ENCODE measurements at regions of chr17 and their contacts with region 1.

Region 1: DNA sequence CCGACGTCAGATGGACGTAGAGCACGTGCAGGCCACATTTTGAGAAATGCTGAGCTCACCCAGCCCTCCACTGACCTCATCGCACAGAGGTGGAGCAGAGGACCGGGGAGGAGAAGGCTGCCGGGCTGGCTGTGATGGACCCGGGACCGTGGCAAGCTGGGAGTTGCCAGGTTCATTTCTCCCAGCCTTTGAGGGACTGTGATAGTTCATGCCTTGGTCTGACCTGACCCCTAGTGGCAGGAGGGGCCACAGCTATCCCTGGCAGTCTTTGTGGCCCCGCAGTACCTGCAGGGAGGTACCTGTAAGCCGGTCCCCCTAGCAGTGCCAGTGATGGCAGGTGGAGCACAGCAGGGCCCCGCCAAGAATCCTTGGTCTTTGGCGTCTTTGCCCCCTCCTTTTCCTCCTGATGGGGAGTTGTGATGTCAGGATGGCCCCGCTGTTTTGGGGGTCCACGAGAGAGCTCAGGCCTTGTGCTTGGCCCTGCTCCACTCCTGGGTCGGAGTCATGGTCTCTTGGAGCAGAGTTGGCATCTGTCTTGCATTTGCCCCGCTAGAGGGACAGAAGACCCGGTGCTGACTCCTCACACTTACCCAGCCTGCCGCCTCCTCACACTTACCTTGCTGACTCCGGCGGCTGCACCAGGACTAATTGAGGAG is 50.4 kb downstream of the OR1D5 start:
- DNase-seq: peak; percentile 36 to 63
- ATAC-seq: peak; percentile 69

Region 2: DNA sequence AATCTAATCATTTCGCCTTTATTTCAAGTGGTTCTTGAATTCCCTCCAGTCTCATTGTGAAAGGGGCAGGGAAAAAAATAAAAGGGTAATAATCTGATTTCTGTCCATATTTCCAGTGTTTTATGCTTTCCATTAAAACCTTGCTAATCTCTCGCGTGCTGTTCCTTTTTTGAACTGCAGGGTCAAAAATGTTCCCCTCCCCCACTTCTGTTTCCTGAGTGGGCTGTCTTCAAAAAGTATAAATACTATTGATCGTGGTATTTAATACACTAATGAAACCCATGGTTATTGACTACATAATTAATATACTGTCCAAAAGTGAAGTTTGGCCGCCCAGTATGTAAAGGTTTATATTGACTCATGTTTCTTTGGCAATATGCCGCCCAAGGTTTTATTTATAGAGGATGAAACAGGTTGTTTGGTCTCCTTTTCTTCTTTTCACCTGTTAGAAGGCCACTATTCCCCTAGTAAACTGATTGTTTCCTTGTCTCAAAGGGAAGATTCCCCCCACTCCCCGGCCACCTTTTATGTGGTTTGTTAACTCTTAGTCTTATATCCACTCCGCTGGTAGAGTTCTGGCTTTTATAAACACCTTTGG is 1113.6 kb before region 1 on chr17:
- intact Hi-C with region 1: no loop called
- DNase-seq: no peak
- ATAC-seq: no peak

Region 3: DNA sequence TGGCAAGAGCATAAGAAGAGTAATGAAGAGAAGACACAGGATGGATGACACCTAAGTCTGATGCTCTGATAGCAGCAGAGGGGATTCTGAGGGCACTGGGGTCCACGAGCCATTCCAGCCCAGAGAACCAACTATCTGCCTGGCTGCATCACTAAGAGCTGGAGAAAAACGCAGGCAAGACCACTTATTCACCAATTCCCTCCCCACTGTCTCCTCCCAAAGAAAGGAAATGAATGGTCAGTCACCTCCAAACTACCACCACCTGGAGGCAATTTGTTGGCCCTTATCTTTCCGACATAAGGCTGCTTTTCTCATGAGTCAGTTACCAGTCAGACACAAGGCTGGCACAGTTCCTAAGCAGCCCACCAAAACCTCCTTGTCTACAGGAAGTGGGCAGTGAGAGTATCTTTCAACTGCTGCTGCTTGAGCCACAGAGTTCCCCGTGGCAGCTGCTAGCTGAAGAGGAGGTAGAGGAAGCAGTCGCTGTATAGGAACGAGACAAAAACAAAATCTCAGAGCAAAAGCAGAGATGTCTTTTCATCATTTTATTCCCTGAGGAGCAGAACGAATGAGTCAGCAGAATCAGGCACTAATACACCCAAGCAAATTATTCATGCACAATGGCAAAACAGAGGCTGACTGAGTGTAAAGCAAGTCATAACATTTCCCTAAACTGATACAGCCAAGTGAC is 820.5 kb before region 1 on chr17:
- intact Hi-C with region 1: no loop called
- DNase-seq: no peak
- ATAC-seq: no peak

Region 4: DNA sequence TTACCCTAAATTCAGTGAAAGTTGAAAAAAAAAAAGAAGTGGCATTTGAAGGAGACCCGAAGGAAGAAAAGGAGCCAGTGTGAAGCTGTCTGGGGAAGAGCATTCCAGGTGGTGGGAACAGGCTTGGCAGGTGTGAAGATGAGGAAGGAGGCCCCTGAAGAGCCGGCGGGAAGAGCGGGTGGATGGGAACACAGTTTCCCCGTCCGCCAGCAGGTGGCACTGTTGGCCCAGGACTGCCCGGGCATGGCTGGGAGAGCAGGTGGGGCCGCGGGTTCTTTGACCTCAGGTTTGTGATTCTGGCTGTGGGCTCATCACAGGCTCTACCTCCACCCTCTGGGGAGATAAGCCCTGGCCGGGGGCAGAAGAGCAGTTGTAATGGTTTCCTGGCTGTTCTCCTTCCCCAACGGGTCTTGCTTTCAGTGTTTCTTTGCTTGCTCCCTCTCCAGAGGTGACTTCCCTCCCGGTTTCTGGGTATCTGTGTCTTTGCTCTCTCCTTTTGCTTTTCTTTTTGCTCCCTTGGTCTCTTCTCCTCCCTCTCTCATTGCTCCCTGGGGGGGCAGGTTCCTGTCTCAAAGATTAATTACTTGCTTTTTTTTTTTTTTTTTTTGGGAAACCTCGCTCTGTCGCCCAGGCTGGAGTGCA is 184.5 kb before region 1 on chr17:
- intact Hi-C with region 1: loop called (anchors 5 to 10 kb)
- DNase-seq: peak; percentile 65 to 85
- ATAC-seq: peak; percentile 95

Region 5: GRCh38 chr17:2847381-2848333 is 165.4 kb before region 1 on chr17:
- intact Hi-C with region 1: loop called in 1 of 2 experiments (anchors 5 kb)
- DNase-seq: no peak
- ATAC-seq: no peak

Measured in left colon (tissue), 2 donors.